Naive thymus-derived CD4-positive, alpha-beta T cell (primary cell): ENCODE measurements at regions of chr2 and their contacts with region 1.

Region 1: GRCh38 chr2:173027181-173028128 is 48.2 kb upstream of the MAP3K20 start:
- DNase-seq: peak; percentile 20 to 75 (median 63)
- ATAC-seq: peak; percentile 91
- H3K4me3 ChIP-seq: no peak overlapping the region
- H3K4me3 Mint-ChIP-seq: no peak overlapping the region
- H3K27ac ChIP-seq: no peak overlapping the region
- H3K27ac Mint-ChIP-seq: no peak overlapping the region
- H3K4me1 ChIP-seq: no peaks in the 10 kb centered on the region
- H3K4me1 Mint-ChIP-seq: peaks cover 0 to 7% (median 3%) of the 10 kb centered on the region in 7 donors
- H3K27me3 ChIP-seq: no peaks in the 10 kb centered on the region
- H3K27me3 Mint-ChIP-seq: peaks cover 6 to 15% (median 9%) of the 10 kb centered on the region in 5 donors

Region 2: DNA sequence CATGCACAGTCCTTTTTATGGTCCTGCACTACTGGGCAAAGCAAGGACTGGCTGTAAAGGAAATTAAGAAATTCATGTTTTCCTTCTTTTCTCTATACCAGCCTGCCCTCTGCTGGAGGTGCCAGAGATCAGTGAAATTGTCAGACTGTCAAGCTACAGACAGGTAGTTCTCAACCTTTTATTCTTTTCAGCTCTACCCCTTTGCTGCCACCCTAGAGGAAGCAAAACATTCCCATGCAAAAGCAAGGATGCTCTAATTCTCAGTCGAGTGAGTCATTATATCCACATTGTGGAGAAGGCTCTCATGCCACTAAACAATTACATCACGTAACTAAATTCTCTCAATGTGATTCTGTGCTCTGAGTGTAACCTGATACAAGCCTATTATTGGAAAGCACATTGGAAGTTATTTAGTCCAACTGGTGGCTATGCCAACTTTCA is 316.9 kb before region 1 on chr2:
- CTCF ChIA-PET with region 1: no interaction called
- POLR2A ChIA-PET with region 1: no interaction called
- intact Hi-C with region 1: no loop called
- DNase-seq: peak in 7 of 9 donors; percentile 16 to 51 (median 46)
- ATAC-seq: peak; percentile 61
- H3K4me3 ChIP-seq: no peak overlapping the region
- H3K4me3 Mint-ChIP-seq: no peak overlapping the region
- H3K27ac ChIP-seq: no peak overlapping the region
- H3K27ac Mint-ChIP-seq: no peak overlapping the region
- H3K4me1 ChIP-seq: no peaks in the 10 kb centered on the region
- H3K4me1 Mint-ChIP-seq: no peaks in the 10 kb centered on the region
- H3K27me3 ChIP-seq: no peaks in the 10 kb centered on the region
- H3K27me3 Mint-ChIP-seq: peaks cover 0 to 25% (median 4%) of the 10 kb centered on the region in 5 donors

Region 3: DNA sequence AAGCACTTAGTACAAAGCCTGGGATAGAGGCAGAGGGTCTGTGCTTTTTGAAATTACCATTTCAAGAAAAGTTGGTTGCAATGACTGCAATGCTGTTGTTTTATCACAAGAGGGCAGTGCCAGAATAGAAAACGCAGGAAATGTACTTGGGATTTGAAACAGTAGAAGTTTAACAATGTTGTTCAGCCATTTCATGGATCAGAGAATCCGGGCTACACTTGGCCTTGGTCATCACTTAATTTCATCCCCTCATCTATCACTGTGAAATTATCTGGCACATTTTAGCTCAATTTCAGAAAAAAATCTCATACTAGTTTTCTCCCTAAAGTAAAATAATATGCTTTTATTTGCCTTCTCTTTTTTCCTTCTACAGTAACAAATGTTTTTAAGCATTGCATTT is 221.0 kb before region 1 on chr2:
- CTCF ChIA-PET with region 1: no interaction called
- POLR2A ChIA-PET with region 1: no interaction called
- intact Hi-C with region 1: loop called in 1 of 2 experiments (anchors 2 kb)
- DNase-seq: peak in 5 of 9 donors; percentile 22 to 32 (median 26)
- ATAC-seq: no peak
- H3K4me3 ChIP-seq: no peak overlapping the region
- H3K4me3 Mint-ChIP-seq: no peak overlapping the region
- H3K27ac ChIP-seq: no peak overlapping the region
- H3K27ac Mint-ChIP-seq: no peak overlapping the region
- H3K4me1 ChIP-seq: no peaks in the 10 kb centered on the region
- H3K4me1 Mint-ChIP-seq: peaks cover 0 to 8% (median 0%) of the 10 kb centered on the region in 7 donors
- H3K27me3 ChIP-seq: no peaks in the 10 kb centered on the region
- H3K27me3 Mint-ChIP-seq: peaks cover 0 to 15% (median 0%) of the 10 kb centered on the region in 5 donors

Region 4: DNA sequence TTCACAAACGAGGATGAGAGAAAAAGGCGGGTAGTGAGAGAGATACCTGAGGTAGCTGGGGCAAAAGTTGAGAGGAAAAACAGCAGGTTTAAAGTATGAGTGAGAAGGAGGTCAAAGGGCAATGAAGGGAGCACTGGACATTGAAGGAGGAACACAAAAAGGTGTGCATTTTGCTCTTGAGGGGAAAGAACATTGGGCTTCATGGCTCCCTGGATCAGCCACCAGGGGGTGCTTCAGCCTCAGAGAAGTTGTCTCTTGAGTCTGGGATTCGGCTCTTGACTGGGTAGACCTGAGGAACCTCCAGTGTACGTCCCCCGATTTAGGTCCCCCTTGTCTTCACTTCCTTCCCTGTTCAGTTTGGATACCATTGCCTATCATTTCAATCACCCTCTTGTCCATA is 163.3 kb before region 1 on chr2:
- CTCF ChIA-PET with region 1: no interaction called
- POLR2A ChIA-PET with region 1: no interaction called
- intact Hi-C with region 1: loop called in 1 of 2 experiments (anchors 1 kb)
- DNase-seq: peak in 8 of 9 donors; percentile 11 to 61 (median 38)
- ATAC-seq: no peak
- H3K4me3 ChIP-seq: no peak overlapping the region
- H3K4me3 Mint-ChIP-seq: no peak overlapping the region
- H3K27ac ChIP-seq: no peak overlapping the region
- H3K27ac Mint-ChIP-seq: no peak overlapping the region
- H3K4me1 ChIP-seq: no peaks in the 10 kb centered on the region
- H3K4me1 Mint-ChIP-seq: no peaks in the 10 kb centered on the region
- H3K27me3 ChIP-seq: no peaks in the 10 kb centered on the region
- H3K27me3 Mint-ChIP-seq: peaks cover 15 to 29% (median 20%) of the 10 kb centered on the region in 5 donors

Region 5: DNA sequence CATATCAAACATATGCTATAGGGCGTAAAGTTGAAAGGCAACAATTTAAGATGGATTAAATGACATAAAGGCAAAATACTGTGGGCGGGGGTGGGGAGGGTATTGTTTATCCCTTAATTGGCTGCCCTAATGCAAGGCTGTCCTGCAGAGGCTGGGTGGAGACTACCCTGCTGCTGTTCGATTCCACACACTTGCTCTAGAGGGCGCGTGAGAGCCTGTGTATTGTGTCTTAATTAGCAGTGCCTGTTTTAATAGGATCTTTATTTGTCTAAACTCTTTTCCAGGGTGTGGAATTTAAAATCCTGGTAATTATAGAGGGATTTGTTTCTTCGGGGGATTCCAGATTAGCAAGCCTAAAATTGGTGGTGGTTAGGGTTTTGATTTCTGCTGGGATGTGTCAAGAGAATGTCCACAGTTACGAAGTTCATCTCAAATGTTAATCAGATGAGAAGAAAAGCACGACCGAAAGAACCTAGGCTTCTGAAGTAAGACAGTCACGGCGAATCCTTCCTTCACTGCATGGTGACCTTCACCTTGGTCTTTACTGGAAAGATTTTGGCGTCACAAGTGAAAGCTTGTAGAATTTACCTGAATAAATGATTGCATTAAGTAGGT is 55.3 kb before region 1 on chr2:
- CTCF ChIA-PET with region 1: no interaction called
- POLR2A ChIA-PET with region 1: no interaction called
- intact Hi-C with region 1: loop called in 1 of 2 experiments (anchors 1 kb)
- DNase-seq: peak in 5 of 9 donors; percentile 21 to 43 (median 31)
- ATAC-seq: peak; percentile 66
- H3K4me3 ChIP-seq: no peak overlapping the region
- H3K4me3 Mint-ChIP-seq: no peak overlapping the region
- H3K27ac ChIP-seq: no peak overlapping the region
- H3K27ac Mint-ChIP-seq: peak overlapping the region in 5 of 9 donors; percentile 4 to 94 (median 76)
- H3K4me1 ChIP-seq: no peaks in the 10 kb centered on the region
- H3K4me1 Mint-ChIP-seq: peaks cover 8 to 34% (median 21%) of the 10 kb centered on the region in 7 donors
- H3K27me3 ChIP-seq: no peaks in the 10 kb centered on the region
- H3K27me3 Mint-ChIP-seq: peaks cover 0 to 10% (median 6%) of the 10 kb centered on the region in 5 donors

Region 6: GRCh38 chr2:173448938-173449471 is 421.6 kb after region 1 on chr2:
- CTCF ChIA-PET with region 1: interaction called, 3 read pairs
- POLR2A ChIA-PET with region 1: no interaction called
- intact Hi-C with region 1: loop called (anchors 5 kb)
- DNase-seq: peak; percentile 12 to 55 (median 31)
- ATAC-seq: peak; percentile 75
- H3K4me3 ChIP-seq: no peak overlapping the region
- H3K4me3 Mint-ChIP-seq: peak overlapping the region in 9 of 10 donors; percentile 25 to 75 (median 46)
- H3K27ac ChIP-seq: no peak overlapping the region
- H3K27ac Mint-ChIP-seq: peak overlapping the region in 3 of 9 donors; percentile 34 to 69 (median 62)
- H3K4me1 ChIP-seq: peaks cover 0 to 8% of the 10 kb centered on the region in 2 donors
- H3K4me1 Mint-ChIP-seq: peaks cover 10 to 29% (median 15%) of the 10 kb centered on the region in 7 donors
- H3K27me3 ChIP-seq: no peaks in the 10 kb centered on the region
- H3K27me3 Mint-ChIP-seq: peaks cover 6 to 30% (median 22%) of the 10 kb centered on the region in 5 donors

Region 7: DNA sequence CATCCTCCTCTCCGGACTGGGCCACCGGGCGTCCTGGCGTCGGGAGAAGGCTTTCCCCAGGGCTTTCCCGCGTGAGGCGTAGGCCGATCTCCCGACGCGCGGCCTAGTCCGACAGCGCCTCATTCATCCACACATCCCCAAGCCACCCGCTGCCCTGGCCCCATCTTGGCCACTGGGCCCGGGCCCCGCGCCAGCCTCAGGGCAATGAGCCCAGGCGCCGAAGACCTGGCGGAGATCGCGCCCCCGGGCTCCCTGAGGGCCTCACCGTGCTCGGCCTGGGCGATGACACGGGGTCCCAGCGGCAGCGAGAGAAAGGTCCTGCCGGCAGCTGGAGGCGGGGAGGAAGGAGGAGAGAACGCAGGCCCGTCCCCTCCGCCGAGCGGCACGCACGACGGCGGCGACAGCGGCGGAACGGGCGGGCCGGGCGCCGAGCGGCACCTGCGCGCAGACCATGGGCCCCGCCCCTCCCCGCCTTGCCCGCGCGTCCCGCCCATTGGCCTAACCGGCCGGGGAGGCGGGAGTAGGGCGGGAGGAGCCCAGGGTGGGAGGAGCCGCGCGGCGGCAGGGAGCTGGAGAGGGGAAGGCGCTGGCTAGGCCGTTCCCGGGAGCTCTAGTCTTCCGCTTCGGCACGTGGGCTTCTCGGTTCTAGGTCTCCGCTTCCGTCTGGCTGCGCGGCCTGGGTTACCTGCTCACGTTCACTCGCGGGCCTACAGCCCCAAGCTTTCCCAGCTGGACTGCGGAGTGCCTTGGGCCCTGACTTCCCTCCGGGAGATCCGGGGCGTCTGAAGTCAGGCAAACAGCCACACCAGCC is 1220.9 kb after region 1 on chr2 and contains the start of gene OLA1:
- CTCF ChIA-PET with region 1: no interaction called
- POLR2A ChIA-PET with region 1: no interaction called
- intact Hi-C with region 1: no loop called
- DNase-seq: peak; percentile 91 to 99 (median 95)
- ATAC-seq: peak; percentile 99
- H3K4me3 ChIP-seq: peak within 1 kb of the TSS; percentile 90
- H3K4me3 Mint-ChIP-seq: peak within 1 kb of the TSS; percentile 71 to 88 (median 86)
- H3K27ac ChIP-seq: peak within 1 kb of the TSS; percentile 82
- H3K27ac Mint-ChIP-seq: peak within 1 kb of the TSS; percentile 67 to 91 (median 79)
- H3K4me1 ChIP-seq: peaks cover 6 to 12% of the 10 kb centered on the region in 2 donors
- H3K4me1 Mint-ChIP-seq: peaks cover 18 to 32% (median 25%) of the 10 kb centered on the region in 7 donors
- H3K27me3 ChIP-seq: no peaks in the 10 kb centered on the region
- H3K27me3 Mint-ChIP-seq: peaks cover 0 to 5% (median 0%) of the 10 kb centered on the region in 5 donors
- total RNA-seq, gene OLA1: 34.4 to 84.7 (median 40.3) TPM